Calu3 (cell line): ENCODE measurements at regions of chr20 and their contacts with region 1.

Region 1: DNA sequence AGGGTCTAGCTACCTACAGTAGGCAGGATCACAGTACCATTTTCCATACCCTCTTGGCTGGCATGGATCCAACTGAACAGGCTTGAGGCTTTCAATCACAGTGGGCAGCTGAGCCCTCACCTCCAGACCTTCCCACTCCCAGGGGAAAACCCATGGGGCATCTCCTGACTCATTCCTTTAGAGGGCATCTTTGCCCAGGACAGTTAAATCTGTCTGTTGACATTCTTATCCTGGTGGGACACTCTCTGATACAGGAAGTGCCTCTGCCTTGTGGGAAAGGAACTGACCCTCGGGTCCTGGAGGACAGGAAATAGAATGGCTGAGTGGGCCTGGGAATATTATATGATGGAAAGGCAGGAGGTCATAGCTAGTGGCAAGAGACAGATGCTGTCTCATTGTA is 10.2 kb upstream of the EPB41L1 start:
- DNase-seq: no peak
- H3K4me3 Mint-ChIP-seq: no peak overlapping the region
- H3K27ac Mint-ChIP-seq: no peak overlapping the region
- H3K4me1 Mint-ChIP-seq: peaks cover 26% of the 10 kb centered on the region
- H3K27me3 Mint-ChIP-seq: no peaks in the 10 kb centered on the region
- CTCF ChIP-seq: no peak

Region 2: GRCh38 chr20:35954200-35954906 is 190.0 kb before region 1 on chr20 and contains the start of gene SCAND1:
- CTCF ChIA-PET with region 1: interaction called, 24 read pairs
- intact Hi-C with region 1: no loop called
- DNase-seq: peak; percentile 99
- H3K4me3 Mint-ChIP-seq: peak within 1 kb of the TSS; percentile 99
- H3K27ac Mint-ChIP-seq: peak within 1 kb of the TSS; percentile 88
- H3K4me1 Mint-ChIP-seq: peaks cover 13% of the 10 kb centered on the region
- H3K27me3 Mint-ChIP-seq: no peaks in the 10 kb centered on the region
- CTCF ChIP-seq: peak; percentile 96
- total RNA-seq, gene SCAND1: 83.5 and 88.6 TPM in 2 replicates

Region 3: DNA sequence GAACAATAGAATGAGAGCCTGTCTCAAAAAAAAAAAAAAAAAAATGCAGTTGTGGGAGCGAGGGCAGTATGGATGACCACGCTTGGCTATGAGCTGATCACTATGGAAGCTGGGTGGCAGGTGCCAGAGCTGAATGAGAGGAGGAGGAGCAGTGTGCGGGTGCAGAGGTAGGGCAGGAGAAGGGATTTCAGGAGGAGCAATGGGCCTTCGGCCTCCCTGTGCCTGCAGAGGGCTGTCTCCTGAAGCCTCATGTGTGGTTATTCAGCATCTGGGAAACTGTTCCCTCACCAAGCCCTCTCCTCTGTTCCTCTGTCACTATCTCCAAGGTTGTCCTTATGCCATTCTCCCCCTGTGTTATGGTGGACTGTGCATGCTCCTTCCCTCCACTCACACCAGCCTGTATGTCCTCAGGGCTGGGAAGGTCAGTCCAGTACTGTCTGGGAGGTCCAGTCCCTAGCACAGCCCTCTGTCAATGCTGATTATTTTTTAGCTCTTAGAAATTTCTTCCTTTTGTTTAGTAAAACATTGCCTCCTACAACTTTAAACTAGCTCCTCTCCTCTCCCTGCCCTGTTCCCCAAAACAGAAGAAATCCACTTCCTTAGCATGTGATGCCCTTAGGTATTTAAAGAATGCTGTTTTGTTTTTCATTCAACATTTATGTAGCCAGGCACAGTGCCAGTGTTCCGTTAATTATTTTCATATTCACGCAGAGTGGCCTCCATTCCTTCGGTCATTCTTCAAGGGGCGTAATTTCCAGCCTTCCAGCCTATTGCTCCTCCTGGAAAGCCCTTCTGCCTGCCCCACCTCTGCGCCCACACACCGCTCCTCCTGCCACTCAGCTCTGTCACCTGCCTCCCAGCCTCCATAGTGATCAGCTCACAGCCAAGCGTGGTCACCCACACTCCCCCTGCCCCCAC is 127.0 kb before region 1 on chr20:
- CTCF ChIA-PET with region 1: interaction called, 21 read pairs
- intact Hi-C with region 1: no loop called
- DNase-seq: peak; percentile 91
- H3K4me3 Mint-ChIP-seq: peak overlapping the region; percentile 23
- H3K27ac Mint-ChIP-seq: peak overlapping the region; percentile 63
- H3K4me1 Mint-ChIP-seq: peaks cover 37% of the 10 kb centered on the region
- H3K27me3 Mint-ChIP-seq: no peaks in the 10 kb centered on the region
- CTCF ChIP-seq: no peak

Region 4: DNA sequence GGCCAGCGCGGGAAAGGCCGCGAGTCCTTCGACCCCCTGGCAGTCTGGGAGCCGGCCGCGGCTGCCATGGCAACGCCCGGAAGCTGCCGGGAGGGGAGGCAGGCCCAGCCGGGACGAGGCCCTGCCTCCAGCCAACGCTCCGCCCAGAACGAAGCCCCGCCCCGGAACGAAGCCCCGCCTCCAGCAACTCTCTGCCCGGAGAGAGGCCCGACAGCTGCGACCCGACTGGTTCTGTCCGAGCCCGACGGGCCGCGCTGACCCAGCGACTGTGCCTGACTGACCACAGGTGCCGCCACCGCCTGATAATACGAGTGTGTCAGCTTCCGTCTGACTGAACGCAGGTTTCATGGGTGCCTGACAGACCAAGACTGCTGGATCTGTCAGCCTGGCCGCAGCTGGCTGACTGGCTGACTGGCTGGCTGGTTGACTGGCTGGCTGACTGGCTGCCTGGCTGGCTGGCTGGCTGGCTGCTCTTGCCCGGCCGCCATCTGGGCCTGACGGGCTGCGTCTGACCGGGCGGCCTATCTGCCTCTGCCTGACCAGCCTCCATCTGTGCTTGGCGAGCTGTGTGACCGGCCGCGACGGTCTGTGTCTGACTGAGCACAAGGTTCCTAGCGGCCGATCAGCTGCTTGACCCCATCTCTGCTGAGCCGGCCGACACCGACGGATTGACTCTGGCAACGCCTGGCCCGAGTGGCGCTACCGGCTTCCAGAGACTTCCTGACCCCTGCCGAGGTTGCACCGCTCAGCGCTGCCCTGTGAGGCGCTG is 79.5 kb before region 1 on chr20:
- CTCF ChIA-PET with region 1: interaction called, 21 read pairs
- intact Hi-C with region 1: no loop called
- DNase-seq: peak; percentile 100
- H3K4me3 Mint-ChIP-seq: peak overlapping the region; percentile 95
- H3K27ac Mint-ChIP-seq: peak overlapping the region; percentile 91
- H3K4me1 Mint-ChIP-seq: peaks cover 35% of the 10 kb centered on the region
- H3K27me3 Mint-ChIP-seq: no peaks in the 10 kb centered on the region
- CTCF ChIP-seq: no peak

Region 5: GRCh38 chr20:36085686-36086267 is 58.6 kb before region 1 on chr20:
- CTCF ChIA-PET with region 1: interaction called, 20 read pairs
- intact Hi-C with region 1: loop called (anchors 2 kb)
- DNase-seq: peak; percentile 93
- H3K4me3 Mint-ChIP-seq: peak overlapping the region; percentile 60
- H3K27ac Mint-ChIP-seq: peak overlapping the region; percentile 89
- H3K4me1 Mint-ChIP-seq: peaks cover 82% of the 10 kb centered on the region
- H3K27me3 Mint-ChIP-seq: no peaks in the 10 kb centered on the region
- CTCF ChIP-seq: no peak

Region 6: DNA sequence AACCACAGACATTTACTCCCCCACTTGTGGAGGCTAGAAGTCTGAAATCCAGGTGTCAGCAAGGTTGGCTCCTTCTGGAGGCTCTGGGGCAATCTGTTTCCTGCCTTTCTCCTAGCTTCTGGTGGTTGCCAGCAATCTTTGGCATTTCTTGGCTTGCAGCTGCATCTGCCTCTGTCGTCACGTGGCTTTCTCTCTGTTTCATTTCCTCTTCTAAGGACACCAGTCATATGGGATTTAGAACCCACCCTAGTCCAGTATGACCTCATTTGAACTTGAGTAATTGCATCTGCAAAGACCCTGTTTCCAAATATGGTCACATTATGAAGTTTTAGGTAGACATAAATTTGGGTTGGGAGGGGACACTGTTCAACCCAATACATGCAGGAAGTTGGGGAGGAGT is 46.0 kb before region 1 on chr20:
- CTCF ChIA-PET with region 1: interaction called, 4 read pairs
- intact Hi-C with region 1: loop called (anchors 2 kb)
- DNase-seq: no peak
- H3K4me3 Mint-ChIP-seq: no peak overlapping the region
- H3K27ac Mint-ChIP-seq: no peak overlapping the region
- H3K4me1 Mint-ChIP-seq: peaks cover 73% of the 10 kb centered on the region
- H3K27me3 Mint-ChIP-seq: no peaks in the 10 kb centered on the region
- CTCF ChIP-seq: no peak

Region 7: GRCh38 chr20:36120987-36121386 is 23.3 kb before region 1 on chr20:
- CTCF ChIA-PET with region 1: no interaction called
- intact Hi-C with region 1: no loop called
- DNase-seq: no peak
- H3K4me3 Mint-ChIP-seq: no peak overlapping the region
- H3K27ac Mint-ChIP-seq: no peak overlapping the region
- H3K4me1 Mint-ChIP-seq: peaks cover 66% of the 10 kb centered on the region
- H3K27me3 Mint-ChIP-seq: no peaks in the 10 kb centered on the region
- CTCF ChIP-seq: no peak